SK-N-SH (cell line): ENCODE measurements at regions of chr3 and their contacts with region 1.

Region 1: GRCh38 chr3:9422712-9423424 is 25.5 kb downstream of the SETD5 start:
- DNase-seq: peak; percentile 74
- H3K4me3 ChIP-seq: peak overlapping the region; percentile 10 to 45; a peak in 1 of 4 replicates
- H3K27ac ChIP-seq: peak overlapping the region; percentile 99 to 100
- H3K4me1 ChIP-seq: peaks cover 31 to 61% of the 10 kb centered on the region in 2 experiments
- H3K27me3 ChIP-seq: no peaks in the 10 kb centered on the region
- CTCF ChIP-seq: peak; percentile 77
- EP300 ChIP-seq: peak; percentile 53 to 72; a peak in 3 of 4 replicates
- RAD21 ChIP-seq: peak; percentile 72

Region 2: DNA sequence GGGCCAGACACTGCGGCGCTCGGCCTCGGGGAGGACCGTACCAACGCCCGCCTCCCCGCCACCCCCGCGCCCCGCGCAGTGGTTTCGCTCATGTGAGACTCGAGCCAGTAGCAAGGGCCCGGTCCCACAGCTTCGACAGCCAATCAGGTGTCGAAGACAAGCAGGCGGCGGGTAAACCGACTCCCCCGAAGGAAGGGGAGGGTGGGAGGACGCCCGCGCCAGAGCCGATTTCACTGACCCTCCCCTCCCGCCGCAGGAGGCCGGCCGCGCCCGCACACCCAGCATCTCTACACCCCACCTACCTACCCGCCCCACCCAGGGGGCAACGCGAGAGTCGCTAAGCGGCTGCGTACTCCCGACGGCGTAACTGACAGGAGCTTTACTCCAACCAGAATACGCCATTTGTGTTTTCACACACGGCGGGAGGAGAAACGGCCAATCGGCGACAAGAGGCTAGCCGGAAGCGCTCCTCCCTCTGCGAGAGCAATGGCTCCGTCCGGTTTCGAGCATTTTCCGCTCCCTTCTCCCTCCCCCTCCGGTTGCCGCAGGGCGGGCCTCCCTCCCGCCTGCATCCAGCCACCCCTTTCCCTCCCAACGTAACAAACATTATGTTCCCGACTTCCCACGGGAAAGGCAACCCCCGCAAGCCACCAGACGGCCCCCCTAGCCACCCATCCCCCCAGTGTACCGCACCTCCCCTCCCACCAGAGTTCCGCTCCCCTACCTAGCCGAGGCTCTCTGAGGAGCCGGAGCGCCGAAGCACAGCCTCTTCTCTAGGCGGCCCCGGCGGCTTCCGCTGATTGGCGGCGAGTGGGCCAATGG is 26.0 kb before region 1 on chr3:
- CTCF ChIA-PET with region 1: interaction called, 6 read pairs
- POLR2A ChIA-PET with region 1: interaction called, 11 read pairs
- DNase-seq: peak; percentile 91
- H3K4me3 ChIP-seq: peak overlapping the region; percentile 85 to 98
- H3K27ac ChIP-seq: peak overlapping the region; percentile 96 to 99
- H3K4me1 ChIP-seq: peaks cover 25 to 35% of the 10 kb centered on the region in 2 experiments; a peak in 3 of 4 replicates
- H3K27me3 ChIP-seq: no peaks in the 10 kb centered on the region
- CTCF ChIP-seq: no peak
- EP300 ChIP-seq: peak; percentile 13 to 41; a peak in 3 of 4 replicates
- RAD21 ChIP-seq: no peak

Region 3: GRCh38 chr3:9402410-9403228 is 20.2 kb before region 1 on chr3:
- CTCF ChIA-PET with region 1: interaction called, 26 read pairs
- POLR2A ChIA-PET with region 1: interaction called, 11 read pairs
- DNase-seq: peak; percentile 44
- H3K4me3 ChIP-seq: peak overlapping the region in 1 of 2 experiments; percentile 18; a peak in 2 of 4 replicates
- H3K27ac ChIP-seq: peak overlapping the region; percentile 30 to 99; a peak in 3 of 4 replicates
- H3K4me1 ChIP-seq: peaks cover 45 to 60% of the 10 kb centered on the region in 2 experiments
- H3K27me3 ChIP-seq: no peaks in the 10 kb centered on the region
- CTCF ChIP-seq: no peak
- EP300 ChIP-seq: no peak
- RAD21 ChIP-seq: no peak

Region 4: GRCh38 chr3:10344147-10344943 is 921.5 kb after region 1 on chr3:
- CTCF ChIA-PET with region 1: no interaction called
- POLR2A ChIA-PET with region 1: no interaction called
- DNase-seq: peak; percentile 86
- H3K4me3 ChIP-seq: no peak overlapping the region; a peak in 1 of 4 replicates
- H3K27ac ChIP-seq: no peak overlapping the region
- H3K4me1 ChIP-seq: peaks cover 0 to 3% of the 10 kb centered on the region in 2 experiments; a peak in 1 of 4 replicates
- H3K27me3 ChIP-seq: no peaks in the 10 kb centered on the region
- CTCF ChIP-seq: peak; percentile 96
- EP300 ChIP-seq: no peak
- RAD21 ChIP-seq: peak; percentile 84